ENCODE measurements at regions of chr1 and their contacts with region 1.

Region 1: GRCh38 chr1:180468311-180468710 is 34.1 kb downstream of the ACBD6 start:
- DNase-seq: no peak
- ATAC-seq: no peak
- H3K4me3 ChIP-seq: no peak overlapping the region
- H3K27ac ChIP-seq: no peak overlapping the region
- H3K4me1 ChIP-seq: no peaks in the 10 kb centered on the region
- H3K27me3 ChIP-seq: no peaks in the 10 kb centered on the region
- CTCF ChIP-seq: no peak

Region 2: GRCh38 chr1:180188091-180188506 is 280.2 kb before region 1 on chr1:
- intact Hi-C with region 1: loop called in 2 of 10 experiments (anchors 10 kb)
- DNase-seq: peak in 1 of 2 donors; percentile 38
- ATAC-seq: peak in 6 of 8 donors; percentile 44 to 65 (median 52)
- H3K4me3 ChIP-seq: no peak overlapping the region
- H3K27ac ChIP-seq: no peak overlapping the region
- H3K4me1 ChIP-seq: no peaks in the 10 kb centered on the region
- H3K27me3 ChIP-seq: no peaks in the 10 kb centered on the region
- CTCF ChIP-seq: peak in 8 of 9 donors; percentile 19 to 66 (median 56)

Region 3: DNA sequence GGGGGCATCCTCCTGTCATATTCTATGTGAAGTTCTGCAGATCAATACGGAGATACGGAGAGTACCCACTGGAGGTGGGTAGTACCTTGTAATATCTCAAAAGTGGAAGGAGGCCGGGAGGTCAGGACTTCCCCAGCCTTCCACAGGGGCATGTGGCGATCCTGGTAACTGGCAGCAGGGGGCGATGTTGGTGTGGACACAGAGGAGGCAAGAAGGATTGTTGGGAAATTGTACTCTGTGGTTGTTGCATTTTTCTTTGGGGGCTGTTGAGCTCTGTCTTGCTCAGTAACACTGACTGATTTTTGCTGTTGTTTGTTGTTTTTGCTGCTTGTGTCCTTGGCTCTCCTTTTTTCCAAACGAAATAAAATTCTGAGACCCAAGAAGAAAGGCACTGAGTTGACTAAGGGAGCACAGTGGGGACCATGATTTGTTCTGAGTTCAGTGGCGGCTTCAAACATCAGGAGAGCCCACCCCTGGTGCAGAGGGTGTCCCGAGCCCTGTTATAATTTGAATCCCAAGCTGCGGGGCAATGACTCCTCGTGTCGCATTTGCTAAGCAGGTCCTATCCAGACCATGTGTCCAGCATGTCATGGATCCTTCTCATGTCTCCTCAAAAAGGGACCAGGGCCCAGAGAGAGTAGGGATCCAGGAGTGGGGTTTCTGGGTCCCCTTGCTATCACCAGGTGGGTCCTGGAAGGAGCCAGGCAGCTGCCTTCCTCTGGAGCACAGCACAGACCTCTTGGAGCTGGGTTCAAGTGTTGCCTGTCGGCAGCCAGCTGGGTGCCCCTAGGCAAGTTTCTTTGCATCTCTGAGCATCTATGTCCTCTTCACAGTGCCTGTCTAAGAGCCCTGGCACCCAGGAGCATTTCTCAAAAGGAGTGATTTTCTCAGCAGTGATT is 215.4 kb before region 1 on chr1:
- intact Hi-C with region 1: loop called in 1 of 10 experiments (anchors 2 kb)
- DNase-seq: peak; percentile 70 to 72
- ATAC-seq: peak in 7 of 8 donors; percentile 31 to 74 (median 53)
- H3K4me3 ChIP-seq: no peak overlapping the region
- H3K27ac ChIP-seq: no peak overlapping the region
- H3K4me1 ChIP-seq: no peaks in the 10 kb centered on the region
- H3K27me3 ChIP-seq: peaks cover 0 to 66% (median 46%) of the 10 kb centered on the region in 7 donors
- CTCF ChIP-seq: peak; percentile 57 to 90 (median 77)